ENCODE measurements at regions of chr13 and their contacts with region 1.

Region 1: GRCh38 chr13:49976314-49977258 is 20.3 kb upstream of the TRIM13 start:
- DNase-seq: peak; percentile 37 to 89
- H3K4me3 ChIP-seq: no peak overlapping the region
- CTCF ChIP-seq: peak in 1 of 3 donors; percentile 72
- POLR2A ChIP-seq: no peak

Region 2: DNA sequence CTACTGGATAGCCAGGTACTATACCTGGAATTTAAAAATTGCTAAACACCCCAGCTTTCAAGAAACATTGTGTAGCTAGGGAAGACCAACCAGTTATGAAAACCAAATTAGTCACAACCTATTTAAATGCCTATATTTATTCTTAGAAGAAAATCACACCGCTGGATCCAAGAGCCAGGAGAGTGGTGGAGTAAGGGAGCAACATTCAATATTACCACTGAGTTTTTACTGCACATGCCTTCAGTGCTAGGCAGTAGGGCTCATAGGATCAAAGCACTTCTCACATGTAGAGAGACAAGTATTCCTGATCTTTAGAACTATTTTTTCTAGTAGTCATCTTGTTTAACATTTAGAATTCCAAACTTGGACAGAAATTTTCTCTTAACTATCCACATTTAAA is 1732.4 kb before region 1 on chr13:
- intact Hi-C with region 1: no loop called
- DNase-seq: no peak
- H3K4me3 ChIP-seq: no peak overlapping the region
- CTCF ChIP-seq: no peak
- POLR2A ChIP-seq: no peak

Region 3: DNA sequence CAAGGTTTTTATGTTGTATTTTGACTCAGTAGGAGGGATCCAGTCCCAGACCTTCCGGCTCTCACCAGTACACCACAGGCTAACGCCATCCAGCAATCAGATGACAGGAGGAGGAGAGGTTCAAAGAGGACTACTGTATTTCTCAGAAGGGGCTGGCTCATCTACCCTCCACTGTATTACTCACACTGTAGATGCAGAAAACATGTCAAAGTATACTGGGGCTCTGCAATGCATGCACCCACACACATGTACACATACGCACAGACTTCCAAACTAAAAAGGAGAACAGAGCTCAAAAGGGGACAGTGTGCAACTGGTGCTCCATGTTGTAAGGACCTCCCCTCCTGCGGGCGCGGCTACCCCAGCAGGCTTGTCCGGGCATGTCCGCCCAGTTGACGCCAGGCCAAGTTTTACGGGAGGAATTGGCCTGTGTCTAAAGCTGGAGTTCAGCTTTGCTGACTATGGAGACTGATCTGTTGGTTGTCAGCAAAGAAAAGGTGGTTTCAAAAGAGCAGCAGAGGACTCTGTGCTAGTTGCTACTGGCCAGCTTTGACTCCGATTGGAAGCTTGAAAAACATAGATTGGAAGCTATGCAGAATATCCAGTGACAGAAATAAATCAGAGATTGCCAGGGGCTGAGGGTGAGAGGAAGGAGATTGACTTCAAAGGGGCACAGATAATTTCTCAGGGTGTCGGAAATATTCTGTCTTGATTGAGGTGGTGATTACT is 552.7 kb after region 1 on chr13:
- intact Hi-C with region 1: loop called (anchors 5 kb)
- DNase-seq: peak; percentile 83 to 95
- H3K4me3 ChIP-seq: no peak overlapping the region
- CTCF ChIP-seq: no peak
- POLR2A ChIP-seq: no peak

Region 4: DNA sequence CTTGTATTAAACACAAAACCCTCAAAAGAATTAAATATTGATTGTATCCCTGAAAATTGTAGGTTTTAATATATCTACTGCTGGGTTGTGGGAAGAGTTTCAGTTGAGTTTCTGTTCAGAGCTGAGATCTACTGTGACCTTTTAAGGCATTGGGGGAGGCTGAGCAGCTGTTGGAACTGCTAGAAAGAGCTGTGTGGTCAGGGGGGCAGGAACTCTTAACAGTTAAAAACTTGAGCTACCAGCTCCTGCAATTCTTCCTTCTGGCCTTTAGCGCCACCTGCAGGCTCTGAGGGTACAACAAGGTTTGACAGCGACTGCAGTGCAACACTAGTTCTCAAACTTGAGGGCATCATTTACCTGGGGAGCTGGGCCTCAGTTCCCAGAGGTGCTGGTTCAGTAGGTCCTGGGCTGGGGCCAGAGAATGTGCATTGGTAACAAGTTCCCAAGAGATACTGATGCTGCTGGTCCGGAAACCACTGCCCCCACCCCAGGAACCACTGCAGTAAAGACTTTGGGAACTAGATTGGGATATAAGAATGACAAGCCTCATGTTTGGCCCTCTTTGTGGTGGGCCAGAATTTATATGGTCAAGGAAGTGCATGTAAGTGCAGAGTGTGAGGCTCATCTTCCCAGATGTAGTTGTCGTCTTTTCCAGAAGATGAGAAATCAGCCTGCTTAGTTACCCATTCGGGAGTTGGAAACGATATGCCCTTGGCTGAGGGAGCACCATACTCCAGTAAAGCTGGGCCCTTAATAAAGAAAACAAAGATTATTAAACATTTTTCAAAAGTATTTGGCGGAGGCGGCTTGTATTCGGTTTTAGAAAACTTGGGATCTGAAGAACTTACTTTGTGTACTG is 935.6 kb after region 1 on chr13:
- intact Hi-C with region 1: loop called (anchors 10 kb)
- DNase-seq: peak; percentile 82 to 98
- H3K4me3 ChIP-seq: no peak overlapping the region
- CTCF ChIP-seq: no peak
- POLR2A ChIP-seq: no peak